RWPE1 (cell line): ENCODE measurements at regions of chr5 and their contacts with region 1.

Region 1: GRCh38 chr5:74919487-74919886 is 53.3 kb upstream of the FAM169A start:
- DNase-seq: peak; percentile 88
- H3K27ac ChIP-seq: no peak overlapping the region
- CTCF ChIP-seq: peak; percentile 76

Region 2: DNA sequence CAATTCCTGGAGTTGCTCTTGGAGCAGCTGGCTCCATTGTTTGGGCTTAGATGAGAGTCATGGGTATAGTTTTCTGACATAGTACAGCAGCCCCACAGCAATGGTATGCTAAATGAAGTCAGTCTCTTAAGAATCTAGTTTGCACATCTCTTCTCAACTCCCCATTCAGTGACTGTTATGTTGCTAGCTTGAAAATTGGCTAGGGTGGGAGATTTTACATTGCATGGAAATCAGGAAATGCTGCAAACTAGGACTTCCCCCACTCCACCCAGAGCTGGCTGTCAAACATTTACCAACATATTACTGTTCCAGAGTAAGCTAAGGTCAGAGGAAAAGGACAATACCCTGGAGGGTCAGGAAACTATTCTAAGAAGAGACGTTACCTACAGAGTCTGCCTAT is 1981.3 kb before region 1 on chr5:
- CTCF ChIA-PET with region 1: interaction called, 14 read pairs
- POLR2A ChIA-PET with region 1: no interaction called
- DNase-seq: no peak
- H3K27ac ChIP-seq: no peak overlapping the region
- CTCF ChIP-seq: no peak

Region 3: DNA sequence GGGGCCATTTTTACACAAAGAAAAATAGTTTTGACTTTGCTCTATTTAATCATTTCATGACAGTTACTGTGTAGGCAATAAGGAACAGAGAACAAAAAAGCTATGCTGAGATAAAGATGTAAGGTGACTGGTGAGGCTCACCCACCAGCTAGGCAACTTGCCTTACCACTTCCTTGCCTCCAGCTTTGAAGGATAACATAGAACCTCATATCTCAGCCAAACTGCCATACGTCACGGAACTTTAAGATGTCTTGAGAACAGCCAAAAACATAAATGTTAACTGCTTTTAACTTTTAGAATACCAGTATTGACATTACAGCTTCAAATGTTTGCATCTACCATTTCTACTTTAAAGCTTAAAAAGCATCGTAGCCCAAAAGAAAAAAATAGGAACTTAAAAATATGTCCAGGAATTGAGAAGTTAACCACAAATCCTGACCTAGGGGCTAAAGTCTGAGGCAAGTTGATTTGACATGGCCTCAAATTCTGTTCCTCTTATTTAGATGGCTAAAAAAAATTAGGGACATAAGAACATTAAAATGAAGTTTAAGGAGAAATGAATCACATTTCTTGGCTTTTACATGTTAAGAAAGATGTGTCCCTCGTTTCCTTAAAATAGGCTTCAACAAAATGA is 140.5 kb after region 1 on chr5:
- CTCF ChIA-PET with region 1: no interaction called
- POLR2A ChIA-PET with region 1: no interaction called
- DNase-seq: no peak
- H3K27ac ChIP-seq: no peak overlapping the region
- CTCF ChIP-seq: no peak